ENCODE measurements at regions of chr10 and their contacts with region 1.

Region 1: DNA sequence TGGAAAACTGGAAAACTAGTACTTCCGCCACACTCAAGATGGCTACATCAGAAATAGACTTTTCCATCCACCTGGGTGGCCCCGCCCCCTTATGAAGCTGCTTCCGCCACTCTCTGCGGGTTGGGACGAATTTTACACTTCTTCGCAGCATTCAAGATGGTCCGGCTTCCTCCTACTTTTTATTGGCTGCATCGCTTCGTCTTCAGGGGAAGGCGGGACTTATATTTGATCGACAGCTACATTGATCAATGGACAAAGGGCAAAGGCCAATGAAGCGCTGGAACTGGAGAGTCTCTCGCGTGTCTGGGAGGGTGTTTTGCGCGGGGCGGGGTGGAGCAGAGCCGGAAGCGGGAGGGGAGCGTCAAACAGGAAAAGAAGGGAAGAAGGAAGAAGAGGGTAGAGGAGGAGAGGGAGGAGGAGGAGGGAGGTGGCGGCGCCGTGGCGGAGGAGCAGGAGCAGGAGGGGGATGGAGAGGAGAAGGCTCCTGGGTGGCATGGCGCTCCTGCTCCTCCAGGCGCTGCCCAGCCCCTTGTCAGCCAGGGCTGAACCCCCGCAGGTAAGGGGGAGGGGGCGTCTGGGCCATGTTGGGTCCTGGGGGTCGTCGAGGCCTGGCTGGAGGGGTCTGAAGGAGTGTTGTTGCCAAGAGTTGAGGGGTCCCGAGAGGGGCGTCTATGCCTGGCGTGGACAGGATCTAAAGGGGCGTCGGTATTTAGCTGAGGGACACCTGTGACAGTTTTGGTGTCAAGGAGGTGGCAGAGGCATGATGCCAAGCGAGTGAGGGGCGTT is at the start of gene WBP1L:
- DNase-seq: peak; percentile 98 to 99
- ATAC-seq: peak; percentile 96 to 98
- H3K4me3 ChIP-seq: peak within 1 kb of the TSS; percentile 85 to 99 (median 98)
- H3K27ac ChIP-seq: peak within 1 kb of the TSS; percentile 94 to 98 (median 96)
- H3K4me1 ChIP-seq: peaks cover 16 to 27% of the 10 kb centered on the region in 2 donors
- H3K27me3 ChIP-seq: no peaks in the 10 kb centered on the region
- CTCF ChIP-seq: no peak
- POLR2A ChIP-seq: peak; percentile 90 to 95
- total RNA-seq, gene WBP1L: 103 to 204 (median 145) TPM

Region 2: GRCh38 chr10:102713814-102714620 is 29.8 kb before region 1 on chr10 and contains the start of gene ARL3:
- in situ Hi-C with region 1: no loop called
- intact Hi-C with region 1: loop called (anchors 2 kb)
- DNase-seq: peak; percentile 96 to 97
- ATAC-seq: peak; percentile 88
- H3K4me3 ChIP-seq: peak within 1 kb of the TSS; percentile 74 to 99 (median 91)
- H3K27ac ChIP-seq: peak within 1 kb of the TSS; percentile 83 to 89 (median 86)
- H3K4me1 ChIP-seq: peaks cover 26 to 28% of the 10 kb centered on the region in 2 donors
- H3K27me3 ChIP-seq: no peaks in the 10 kb centered on the region
- CTCF ChIP-seq: peak; percentile 48 to 66 (median 61)
- POLR2A ChIP-seq: peak; percentile 58 to 70
- total RNA-seq, gene ARL3: 1.0 to 2.4 (median 1.5) TPM

Region 3: GRCh38 chr10:102802920-102803534 is 59.2 kb after region 1 on chr10:
- in situ Hi-C with region 1: loop called in 1 of 4 experiments (anchors 10 kb)
- intact Hi-C with region 1: loop called (anchors 1 kb)
- DNase-seq: peak in 1 of 2 donors; percentile 39
- ATAC-seq: peak in 1 of 2 donors; percentile 12
- H3K4me3 ChIP-seq: no peak overlapping the region
- H3K27ac ChIP-seq: peak overlapping the region; percentile 77 to 100 (median 92)
- H3K4me1 ChIP-seq: peaks cover 70% of the 10 kb centered on the region in 2 donors
- H3K27me3 ChIP-seq: no peaks in the 10 kb centered on the region
- CTCF ChIP-seq: no peak
- POLR2A ChIP-seq: no peak

Region 4: GRCh38 chr10:102815790-102816549 is 72.2 kb after region 1 on chr10:
- in situ Hi-C with region 1: loop called in 1 of 4 experiments (anchors 10 kb)
- intact Hi-C with region 1: no loop called
- DNase-seq: peak; percentile 51 to 57
- ATAC-seq: peak; percentile 43 to 61
- H3K4me3 ChIP-seq: no peak overlapping the region
- H3K27ac ChIP-seq: peak overlapping the region; percentile 84 to 89 (median 86)
- H3K4me1 ChIP-seq: peaks cover 40 to 46% of the 10 kb centered on the region in 2 donors
- H3K27me3 ChIP-seq: no peaks in the 10 kb centered on the region
- CTCF ChIP-seq: no peak
- POLR2A ChIP-seq: peak; percentile 33 to 60

Region 5: DNA sequence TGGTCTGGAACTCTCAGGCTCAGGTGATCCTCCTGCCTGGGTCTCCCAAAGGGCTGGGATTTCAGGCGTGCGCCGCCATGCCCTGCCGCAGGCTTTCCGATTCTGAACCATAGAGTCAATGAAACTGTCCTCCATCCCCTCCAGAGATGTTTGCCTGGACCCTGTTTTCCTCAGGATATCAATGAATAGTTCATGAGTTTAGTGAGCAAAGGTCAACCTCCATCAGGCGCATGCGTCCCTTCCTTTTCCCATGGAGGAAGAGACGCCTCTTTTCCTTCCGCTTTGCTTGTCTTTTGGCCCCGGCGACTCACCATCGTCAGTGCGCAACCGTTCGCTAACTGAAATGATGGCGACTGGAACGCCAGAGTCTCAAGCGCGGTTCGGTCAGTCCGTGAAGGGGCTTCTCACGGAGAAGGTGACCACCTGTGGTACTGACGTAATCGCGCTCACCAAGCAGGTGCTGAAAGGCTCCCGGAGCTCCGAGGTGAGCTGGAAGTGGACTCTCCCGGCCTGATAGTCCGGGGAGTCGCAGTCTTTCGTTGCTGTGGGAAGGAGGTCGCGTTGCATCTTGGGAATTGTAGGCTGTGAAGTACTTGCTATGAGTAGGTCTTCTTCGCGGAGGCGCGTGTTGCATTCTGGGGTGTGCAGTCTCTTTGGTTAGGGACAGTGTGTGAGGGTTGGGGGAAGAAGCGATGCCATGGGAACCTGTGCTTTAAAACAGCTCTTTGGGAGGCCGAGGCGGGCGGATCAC is 110.3 kb after region 1 on chr10 and contains the start of gene BORCS7:
- in situ Hi-C with region 1: no loop called
- intact Hi-C with region 1: loop called (anchors 5 kb)
- DNase-seq: peak; percentile 95
- ATAC-seq: peak; percentile 100
- H3K4me3 ChIP-seq: peak within 1 kb of the TSS; percentile 75 to 95 (median 84)
- H3K27ac ChIP-seq: peak within 1 kb of the TSS; percentile 94 to 96 (median 96)
- H3K4me1 ChIP-seq: peaks cover 14% of the 10 kb centered on the region in 2 donors
- H3K27me3 ChIP-seq: no peaks in the 10 kb centered on the region
- CTCF ChIP-seq: peak in 1 of 5 experiments; percentile 12
- POLR2A ChIP-seq: peak; percentile 77
- total RNA-seq, gene BORCS7: 18.1 to 38.2 (median 27.1) TPM

Region 6: GRCh38 chr10:103069453-103070331 is 325.9 kb after region 1 on chr10:
- in situ Hi-C with region 1: loop called in 2 of 4 experiments (anchors 25 kb)
- intact Hi-C with region 1: no loop called
- DNase-seq: peak in 1 of 2 donors; percentile 49
- ATAC-seq: peak in 1 of 2 donors; percentile 66
- H3K4me3 ChIP-seq: no peak overlapping the region
- H3K27ac ChIP-seq: no peak overlapping the region
- H3K4me1 ChIP-seq: no peaks in the 10 kb centered on the region
- H3K27me3 ChIP-seq: no peaks in the 10 kb centered on the region
- CTCF ChIP-seq: peak; percentile 11 to 66 (median 58)
- POLR2A ChIP-seq: no peak

Region 7: GRCh38 chr10:103244663-103245271 is 501.0 kb after region 1 on chr10:
- in situ Hi-C with region 1: loop called in 2 of 4 experiments (anchors 25 kb)
- intact Hi-C with region 1: no loop called
- DNase-seq: peak; percentile 50 to 79
- ATAC-seq: peak; percentile 69 to 82
- H3K4me3 ChIP-seq: no peak overlapping the region
- H3K27ac ChIP-seq: no peak overlapping the region
- H3K4me1 ChIP-seq: peaks cover 19% of the 10 kb centered on the region in 2 donors
- H3K27me3 ChIP-seq: no peaks in the 10 kb centered on the region
- CTCF ChIP-seq: peak; percentile 90 to 91 (median 91)
- POLR2A ChIP-seq: no peak

Measured in gastrocnemius medialis (tissue), 4 donors.